Vagina (tissue), 2 donors: ENCODE measurements at regions of chr14 and their contacts with region 1.

Region 1: DNA sequence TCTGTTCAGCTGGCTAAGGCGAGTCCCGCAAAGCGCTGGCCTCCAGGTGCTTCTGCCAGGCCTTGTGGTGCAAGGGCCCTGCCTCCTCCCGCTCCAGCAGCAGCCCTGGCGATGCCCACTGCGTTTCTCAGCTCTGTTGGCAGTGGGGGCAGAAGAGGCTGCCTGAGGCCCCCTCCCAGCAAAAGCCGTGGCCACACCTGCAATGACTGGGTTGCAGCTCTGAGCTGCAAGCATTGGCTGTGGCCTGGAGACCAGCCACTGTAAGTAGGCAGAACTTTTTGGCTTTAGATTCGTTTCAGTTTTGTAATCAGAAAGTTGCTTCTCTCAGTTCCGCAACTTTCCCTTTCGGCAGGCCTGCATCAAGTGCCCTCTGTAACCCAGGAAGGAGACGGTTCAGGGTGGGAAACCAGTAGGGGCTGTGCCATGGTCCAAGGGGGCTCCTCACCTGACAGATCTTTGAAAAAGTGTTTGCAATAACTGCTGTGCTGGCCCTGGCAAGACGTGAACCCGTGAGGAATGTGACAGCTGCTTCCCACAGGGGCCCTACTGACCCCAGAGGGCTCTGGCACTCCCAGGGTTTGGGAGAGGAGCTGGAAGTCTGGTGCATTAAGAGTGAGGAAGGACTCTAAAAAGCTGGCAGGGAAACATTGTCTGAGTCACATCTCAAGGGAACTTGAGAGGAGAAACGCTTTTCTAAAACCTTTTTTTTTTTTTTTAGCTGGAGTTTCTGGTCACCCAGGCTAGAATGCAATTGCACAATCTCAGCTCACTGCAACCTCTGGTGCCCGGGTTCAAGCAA is 54.5 kb upstream of the MAX start:
- DNase-seq: no peak
- H3K4me3 ChIP-seq: peak overlapping the region in 1 of 2 donors; percentile 27
- H3K27ac ChIP-seq: peak overlapping the region; percentile 79
- H3K4me1 ChIP-seq: peaks cover 29% of the 10 kb centered on the region
- H3K27me3 ChIP-seq: no peaks in the 10 kb centered on the region
- CTCF ChIP-seq: no peak
- POLR2A ChIP-seq: no peak

Region 2: GRCh38 chr14:63605041-63605532 is 1551.7 kb before region 1 on chr14:
- intact Hi-C with region 1: no loop called
- DNase-seq: no peak
- H3K4me3 ChIP-seq: no peak overlapping the region
- H3K27ac ChIP-seq: no peak overlapping the region
- H3K4me1 ChIP-seq: no peaks in the 10 kb centered on the region
- H3K27me3 ChIP-seq: no peaks in the 10 kb centered on the region
- CTCF ChIP-seq: no peak
- POLR2A ChIP-seq: no peak

Region 3: DNA sequence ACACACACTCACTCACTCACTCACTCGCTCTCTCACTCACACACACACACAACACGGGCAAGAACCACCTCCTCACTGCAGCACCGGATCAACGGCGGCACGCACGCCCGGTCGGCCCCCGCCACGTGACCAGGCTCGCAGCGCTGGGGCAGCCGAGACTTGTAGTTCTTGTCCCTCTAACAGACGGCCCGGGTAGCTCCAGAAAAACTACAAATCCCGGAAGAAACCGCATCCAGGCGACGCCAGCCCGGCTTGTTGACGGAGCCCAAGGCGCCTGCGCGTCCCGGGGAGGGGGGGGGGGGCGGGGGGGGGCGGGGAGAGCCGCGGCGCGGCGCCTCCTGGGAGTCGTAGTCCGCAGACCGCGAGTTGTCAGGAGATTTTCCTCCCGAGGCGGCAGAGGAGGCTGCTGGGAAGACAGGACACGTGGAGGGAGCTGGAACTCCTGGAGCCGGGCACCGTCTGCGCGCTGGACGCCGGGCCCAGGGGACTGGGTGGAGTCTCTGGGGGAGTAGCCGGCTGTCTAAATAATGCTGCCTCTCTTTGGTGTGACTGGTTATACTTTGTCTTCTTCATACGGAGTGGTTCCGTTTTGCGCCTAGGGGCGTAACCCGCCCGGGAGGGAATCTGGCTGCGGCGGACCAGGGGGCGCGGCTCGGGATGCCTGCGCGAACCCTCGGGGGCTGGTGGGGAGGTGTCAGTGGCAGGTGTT is 54.2 kb before region 1 on chr14 and contains the start of gene MAX:
- intact Hi-C with region 1: loop called (anchors 10 kb)
- DNase-seq: peak; percentile 100
- H3K4me3 ChIP-seq: peak within 1 kb of the TSS; percentile 76 to 85
- H3K27ac ChIP-seq: peak within 1 kb of the TSS; percentile 92
- H3K4me1 ChIP-seq: peaks cover 45% of the 10 kb centered on the region
- H3K27me3 ChIP-seq: no peaks in the 10 kb centered on the region
- CTCF ChIP-seq: no peak
- POLR2A ChIP-seq: peak in 1 of 2 donors; percentile 86
- total RNA-seq, gene MAX: 71.7 TPM

Region 4: GRCh38 chr14:65958664-65959562 is 802.1 kb after region 1 on chr14:
- intact Hi-C with region 1: loop called (anchors 10 kb)
- DNase-seq: no peak
- H3K4me3 ChIP-seq: no peak overlapping the region
- H3K27ac ChIP-seq: no peak overlapping the region
- H3K4me1 ChIP-seq: no peaks in the 10 kb centered on the region
- H3K27me3 ChIP-seq: no peaks in the 10 kb centered on the region
- CTCF ChIP-seq: peak in 1 of 3 experiments; percentile 29
- POLR2A ChIP-seq: no peak